Heart right ventricle (tissue), 16 donors: ENCODE measurements at regions of chr9 and their contacts with region 1.

Region 1: GRCh38 chr9:36499174-36499890 is 73.4 kb upstream of the MELK start:
- DNase-seq: no peak
- ATAC-seq: no peak
- H3K4me3 ChIP-seq: no peak overlapping the region
- H3K27ac ChIP-seq: no peak overlapping the region
- H3K4me1 ChIP-seq: peaks cover 0 to 8% (median 0%) of the 10 kb centered on the region in 9 donors
- H3K27me3 ChIP-seq: no peaks in the 10 kb centered on the region
- CTCF ChIP-seq: no peak

Region 2: DNA sequence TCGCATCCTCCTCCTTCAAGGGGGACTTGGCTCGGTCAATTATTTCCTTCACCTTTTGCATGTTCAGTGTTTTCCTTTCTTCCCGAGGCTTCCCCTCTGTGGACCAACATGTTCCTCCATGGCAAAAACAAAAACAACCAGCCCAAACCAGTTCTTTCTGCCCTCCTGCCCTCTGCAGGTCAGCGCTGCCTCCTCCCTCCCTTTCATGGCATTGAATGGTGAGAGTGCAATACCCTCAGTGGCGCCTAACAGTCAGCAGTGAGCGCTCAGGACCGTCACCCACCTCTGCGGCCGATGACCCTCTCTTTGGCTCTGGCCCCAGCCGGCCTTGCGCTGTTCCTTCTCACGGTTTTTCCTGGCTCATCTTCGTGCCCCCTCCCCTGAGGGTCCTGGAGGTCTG is 206.7 kb before region 1 on chr9:
- intact Hi-C with region 1: no loop called
- DNase-seq: no peak
- ATAC-seq: no peak
- H3K4me3 ChIP-seq: no peak overlapping the region
- H3K27ac ChIP-seq: no peak overlapping the region
- H3K4me1 ChIP-seq: peaks cover 0 to 12% (median 3%) of the 10 kb centered on the region in 9 donors
- H3K27me3 ChIP-seq: no peaks in the 10 kb centered on the region
- CTCF ChIP-seq: no peak

Region 3: DNA sequence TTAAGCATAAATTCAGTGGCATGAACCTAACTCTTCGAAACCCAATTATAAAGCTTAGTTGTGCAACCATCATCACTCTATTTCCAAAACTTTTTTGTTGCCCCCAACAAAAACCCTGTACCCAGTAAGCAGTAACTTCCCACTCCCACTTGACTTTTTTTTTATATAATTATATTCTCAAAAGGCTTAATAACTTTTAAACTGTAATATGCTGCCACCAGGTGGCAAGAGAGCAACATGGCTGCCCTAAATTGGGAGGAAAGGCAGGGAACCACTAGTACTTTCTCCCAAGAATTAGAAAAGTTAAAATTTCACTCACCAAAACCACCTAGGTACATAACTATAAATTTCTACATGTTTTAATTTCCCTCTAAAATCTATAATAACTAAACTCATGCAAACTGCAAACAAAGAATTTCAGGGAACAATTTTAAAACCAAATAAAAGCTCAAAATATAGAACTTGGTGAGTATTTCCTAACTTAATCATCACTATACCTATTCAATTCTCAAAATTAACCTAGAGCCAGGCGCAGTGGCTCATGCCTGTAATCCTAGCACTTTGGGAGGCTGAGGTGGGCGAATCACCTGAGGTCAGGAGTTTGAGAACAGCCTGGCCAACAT is 49.1 kb before region 1 on chr9:
- intact Hi-C with region 1: loop called in 1 of 10 experiments (anchors 10 kb)
- DNase-seq: peak in 1 of 2 donors; percentile 18
- ATAC-seq: peak in 3 of 8 donors; percentile 43 to 51 (median 45)
- H3K4me3 ChIP-seq: no peak overlapping the region
- H3K27ac ChIP-seq: no peak overlapping the region
- H3K4me1 ChIP-seq: peaks cover 0 to 37% (median 9%) of the 10 kb centered on the region in 9 donors
- H3K27me3 ChIP-seq: no peaks in the 10 kb centered on the region
- CTCF ChIP-seq: peak; percentile 50 to 80 (median 71)

Region 4: DNA sequence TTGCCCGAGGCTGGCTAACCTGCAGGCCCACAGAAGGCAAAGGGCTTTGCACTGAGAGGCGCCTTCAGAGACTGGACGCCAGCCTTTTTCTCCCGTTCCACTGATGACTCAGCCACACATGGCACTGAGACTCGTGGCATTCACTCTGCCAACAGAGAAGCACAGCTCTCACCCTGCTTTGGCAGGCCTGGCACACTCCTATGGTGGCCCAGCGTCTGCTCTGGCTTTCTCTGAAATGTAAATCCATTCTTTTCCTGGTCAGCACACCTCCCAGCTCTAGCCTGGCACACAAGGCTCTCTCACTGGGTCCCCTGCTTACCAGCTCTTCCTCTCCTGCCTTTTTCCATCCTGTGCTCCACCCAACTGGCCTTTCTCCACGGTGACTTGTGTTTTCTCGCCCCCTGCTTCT is 67.5 kb after region 1 on chr9:
- intact Hi-C with region 1: loop called in 1 of 10 experiments (anchors 10 kb)
- DNase-seq: peak; percentile 17 to 19
- ATAC-seq: peak; percentile 38 to 90 (median 84)
- H3K4me3 ChIP-seq: no peak overlapping the region
- H3K27ac ChIP-seq: peak overlapping the region in 4 of 10 donors; percentile 25 to 56 (median 42)
- H3K4me1 ChIP-seq: no peaks in the 10 kb centered on the region
- H3K27me3 ChIP-seq: no peaks in the 10 kb centered on the region
- CTCF ChIP-seq: no peak